Mammary epithelial cell (primary cell): ENCODE measurements at regions of chr5 and their contacts with region 1.

Region 1: DNA sequence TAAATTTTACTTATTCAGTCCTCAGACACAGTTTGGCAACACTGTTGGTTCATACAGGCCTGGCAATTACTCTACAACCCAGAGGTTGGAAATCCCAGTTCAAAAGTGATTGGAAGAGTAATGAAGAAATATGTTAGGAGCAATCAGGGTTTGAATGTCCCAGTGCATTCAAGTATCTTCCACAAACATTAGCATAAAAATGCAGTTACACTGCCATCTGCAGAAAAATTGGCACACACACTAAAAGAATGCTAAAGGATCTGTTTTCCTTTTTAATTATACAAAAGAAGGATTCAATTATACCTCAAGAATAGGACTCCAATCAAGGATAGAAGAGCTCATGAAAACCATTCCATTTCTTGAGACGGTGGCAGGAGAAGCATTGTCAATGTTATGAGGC is 130.2 kb downstream of the DNAH5 start:
- DNase-seq: peak; percentile 33
- H3K4me3 ChIP-seq: no peak overlapping the region
- H3K27ac ChIP-seq: no peak overlapping the region
- H3K4me1 ChIP-seq: peaks cover 2% of the 10 kb centered on the region
- H3K27me3 ChIP-seq: no peaks in the 10 kb centered on the region
- CTCF ChIP-seq: peak; percentile 22 to 47

Region 2: DNA sequence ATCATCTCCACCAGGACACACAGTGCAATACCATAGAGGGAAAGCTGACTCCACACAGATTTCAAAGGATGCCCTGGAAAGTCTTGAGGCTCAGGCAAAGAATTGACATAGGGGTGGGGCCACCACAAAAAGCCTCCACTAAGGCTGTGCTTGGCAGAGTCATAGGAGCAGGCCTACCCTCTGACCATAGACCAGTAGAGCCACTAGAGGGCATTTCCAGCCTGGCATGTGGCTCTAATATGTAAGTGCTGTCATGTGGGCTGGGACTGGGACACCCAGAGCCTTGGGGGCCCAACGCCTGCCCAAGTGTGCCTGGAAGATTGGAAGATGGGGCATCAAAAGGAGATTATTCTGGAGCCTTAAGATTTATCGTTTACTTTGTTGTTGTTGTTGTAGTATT is 595.8 kb before region 1 on chr5:
- CTCF ChIA-PET with region 1: no interaction called
- dilution Hi-C with region 1: no loop called
- in situ Hi-C with region 1: no loop called
- intact Hi-C with region 1: loop called (anchors 1 kb)
- DNase-seq: peak; percentile 29
- H3K4me3 ChIP-seq: no peak overlapping the region
- H3K27ac ChIP-seq: no peak overlapping the region
- H3K4me1 ChIP-seq: no peaks in the 10 kb centered on the region
- H3K27me3 ChIP-seq: no peaks in the 10 kb centered on the region
- CTCF ChIP-seq: peak; percentile 35 to 64

Region 3: GRCh38 chr5:13510616-13511015 is 303.7 kb before region 1 on chr5:
- CTCF ChIA-PET with region 1: no interaction called
- dilution Hi-C with region 1: no loop called
- in situ Hi-C with region 1: no loop called
- intact Hi-C with region 1: no loop called
- DNase-seq: peak; percentile 96
- H3K4me3 ChIP-seq: no peak overlapping the region
- H3K27ac ChIP-seq: peak overlapping the region; percentile 81
- H3K4me1 ChIP-seq: peaks cover 37% of the 10 kb centered on the region
- H3K27me3 ChIP-seq: no peaks in the 10 kb centered on the region
- CTCF ChIP-seq: no peak

Region 4: GRCh38 chr5:14011089-14012004 is 197.0 kb after region 1 on chr5:
- CTCF ChIA-PET with region 1: no interaction called
- dilution Hi-C with region 1: no loop called
- in situ Hi-C with region 1: no loop called
- intact Hi-C with region 1: no loop called
- DNase-seq: peak; percentile 90
- H3K4me3 ChIP-seq: peak overlapping the region; percentile 55 to 73 (median 62)
- H3K27ac ChIP-seq: peak overlapping the region; percentile 87
- H3K4me1 ChIP-seq: peaks cover 5% of the 10 kb centered on the region
- H3K27me3 ChIP-seq: no peaks in the 10 kb centered on the region
- CTCF ChIP-seq: peak in 1 of 2 donors; percentile 17